Esophagus squamous epithelium (tissue), 5 donors: ENCODE measurements at regions of chr6 and their contacts with region 1.

Region 1: DNA sequence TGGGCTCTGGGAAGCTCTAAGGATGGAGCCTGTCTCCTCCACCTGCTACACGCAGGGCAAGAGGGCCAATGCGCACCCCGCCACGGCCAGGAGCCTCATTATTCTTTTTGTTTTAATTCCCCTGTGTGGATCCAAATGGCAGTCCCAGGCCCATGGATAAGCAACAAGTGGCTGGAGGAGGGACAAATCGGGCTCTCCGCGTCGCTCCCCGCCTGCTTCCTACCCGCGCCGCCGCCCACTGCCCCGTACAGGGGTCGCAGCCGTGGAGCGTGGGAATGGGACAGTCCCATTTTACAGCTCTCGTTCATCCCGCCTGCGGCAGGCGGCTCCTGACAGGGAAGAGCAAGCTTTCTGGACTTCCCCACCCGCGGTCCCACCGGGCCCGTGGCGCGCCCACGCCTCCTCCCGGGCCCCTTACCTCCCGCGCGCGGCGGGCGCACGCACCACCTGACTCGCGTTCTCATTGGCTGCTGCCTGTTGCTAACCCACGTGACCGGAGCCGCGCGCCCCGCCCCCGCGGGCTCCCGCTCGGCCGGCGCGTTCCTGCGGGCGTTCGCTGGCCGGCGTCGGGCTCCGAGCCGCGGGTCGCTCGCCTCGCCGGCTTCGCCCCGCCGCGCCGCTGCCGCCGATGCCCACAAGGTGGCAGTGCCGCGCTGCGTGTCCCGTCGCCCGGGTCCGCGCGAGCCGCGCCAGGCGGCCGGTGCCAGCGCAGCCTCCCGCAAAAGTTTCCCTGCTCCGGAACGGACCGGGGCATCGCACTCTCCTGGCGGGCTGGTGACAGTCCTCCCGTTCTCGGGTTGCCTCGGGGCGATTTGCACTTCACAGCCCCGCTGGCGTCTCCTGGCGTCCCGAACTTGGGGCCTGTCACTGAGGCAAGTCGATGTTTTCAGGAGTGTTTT is 93.3 kb downstream of the CD83 start:
- DNase-seq: peak; percentile 49
- H3K4me3 ChIP-seq: peak overlapping the region; percentile 49 to 83 (median 78)
- H3K27ac ChIP-seq: peak overlapping the region; percentile 78 to 91 (median 88)
- H3K4me1 ChIP-seq: peaks cover 7 to 25% (median 17%) of the 10 kb centered on the region in 3 donors
- H3K27me3 ChIP-seq: no peaks in the 10 kb centered on the region
- CTCF ChIP-seq: peak; percentile 29 to 99 (median 95)
- POLR2A ChIP-seq: peak in 3 of 4 donors; percentile 10 to 74 (median 53)

Region 2: DNA sequence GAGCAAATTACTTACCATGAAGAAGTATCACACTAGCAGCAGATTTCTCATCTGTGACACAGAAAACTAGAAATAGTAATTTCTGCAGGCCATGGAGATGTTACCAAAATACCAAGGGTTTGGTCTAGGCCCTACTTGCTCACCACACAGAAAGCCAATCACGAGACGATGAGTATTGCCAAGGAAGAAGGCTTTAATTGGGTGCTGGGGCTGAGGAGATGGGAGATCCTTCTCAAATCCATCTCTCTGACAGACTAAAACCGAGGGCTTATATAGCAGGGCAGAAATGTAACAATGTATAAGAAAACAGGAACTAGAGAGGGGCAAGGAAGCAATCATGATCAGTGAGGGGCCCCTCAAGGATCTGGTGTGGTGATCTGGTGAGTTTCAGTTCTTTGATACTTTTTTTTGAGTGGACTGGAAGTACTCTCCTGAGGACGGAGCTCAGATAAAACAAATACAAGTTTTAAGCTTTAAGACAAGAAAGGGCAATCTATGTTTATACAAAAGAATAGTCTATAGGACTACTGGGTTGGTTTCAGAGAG is 245.3 kb before region 1 on chr6:
- intact Hi-C with region 1: no loop called
- DNase-seq: no peak
- H3K4me3 ChIP-seq: no peak overlapping the region
- H3K27ac ChIP-seq: no peak overlapping the region
- H3K4me1 ChIP-seq: no peaks in the 10 kb centered on the region
- H3K27me3 ChIP-seq: peaks cover 0 to 27% (median 0%) of the 10 kb centered on the region in 4 donors
- CTCF ChIP-seq: no peak
- POLR2A ChIP-seq: no peak

Region 3: GRCh38 chr6:15017261-15017660 is 806.3 kb after region 1 on chr6:
- intact Hi-C with region 1: no loop called
- DNase-seq: no peak
- H3K4me3 ChIP-seq: peak overlapping the region in 1 of 4 donors; percentile 37
- H3K27ac ChIP-seq: no peak overlapping the region
- H3K4me1 ChIP-seq: peaks cover 0 to 9% (median 0%) of the 10 kb centered on the region in 3 donors
- H3K27me3 ChIP-seq: no peaks in the 10 kb centered on the region
- CTCF ChIP-seq: no peak
- POLR2A ChIP-seq: no peak

Region 4: GRCh38 chr6:15245361-15246216 is 1034.7 kb after region 1 on chr6 and contains the start of gene JARID2:
- intact Hi-C with region 1: loop called (anchors 10 kb)
- DNase-seq: peak; percentile 90
- H3K4me3 ChIP-seq: peak within 1 kb of the TSS; percentile 54 to 94 (median 91)
- H3K27ac ChIP-seq: peak within 1 kb of the TSS; percentile 95 to 99 (median 97)
- H3K4me1 ChIP-seq: peaks cover 7 to 46% (median 21%) of the 10 kb centered on the region in 3 donors
- H3K27me3 ChIP-seq: no peaks in the 10 kb centered on the region
- CTCF ChIP-seq: peak in 4 of 6 experiments; percentile 4 to 32 (median 28)
- POLR2A ChIP-seq: peak in 3 of 4 donors; percentile 47 to 94 (median 87)
- total RNA-seq, gene JARID2: 13.3 to 19.6 (median 16.3) TPM